PC-3 (cell line): ENCODE measurements at regions of chr2 and their contacts with region 1.

Region 1: DNA sequence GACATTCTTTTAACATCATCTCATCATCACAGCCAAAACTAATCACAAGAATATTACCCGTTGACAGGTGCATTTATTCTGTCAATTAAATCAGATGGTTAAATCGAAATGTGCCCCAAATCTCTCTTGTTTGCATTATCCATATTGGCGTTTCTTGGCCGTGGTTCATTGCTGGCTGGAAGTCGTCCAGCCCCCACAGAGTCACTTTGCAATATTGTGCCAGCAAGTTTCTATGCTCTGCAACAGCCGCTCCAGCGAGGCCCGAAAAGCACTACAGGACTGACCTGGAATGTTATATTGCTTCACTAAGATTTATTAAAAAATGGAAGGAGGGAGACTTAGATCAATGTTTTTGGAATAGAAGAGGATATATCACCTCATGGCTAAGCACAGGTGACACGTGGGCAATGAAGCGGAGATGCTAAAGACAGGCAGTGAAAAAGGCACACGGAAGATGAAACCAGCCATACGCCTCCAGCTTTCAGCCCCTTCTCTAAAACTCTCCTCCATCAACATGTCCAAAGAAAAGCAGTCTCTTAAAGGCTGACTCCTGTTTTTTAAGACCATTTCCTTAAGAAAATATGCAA is 176.8 kb upstream of the VRK2 start:
- DNase-seq: peak; percentile 77
- ATAC-seq: no peak
- H3K4me3 ChIP-seq: no peak overlapping the region
- H3K27ac ChIP-seq: peak overlapping the region; percentile 97
- H3K4me1 ChIP-seq: peaks cover 68% of the 10 kb centered on the region
- H3K27me3 ChIP-seq: no peaks in the 10 kb centered on the region
- CTCF ChIP-seq: no peak

Region 2: GRCh38 chr2:57881998-57882884 is 12.4 kb after region 1 on chr2:
- CTCF ChIA-PET with region 1: no interaction called
- POLR2A ChIA-PET with region 1: no interaction called
- intact Hi-C with region 1: loop called (anchors 1 kb)
- DNase-seq: peak; percentile 95
- ATAC-seq: peak; percentile 76
- H3K4me3 ChIP-seq: peak overlapping the region; percentile 49
- H3K27ac ChIP-seq: peak overlapping the region; percentile 97
- H3K4me1 ChIP-seq: peaks cover 84% of the 10 kb centered on the region
- H3K27me3 ChIP-seq: no peaks in the 10 kb centered on the region
- CTCF ChIP-seq: no peak

Region 3: DNA sequence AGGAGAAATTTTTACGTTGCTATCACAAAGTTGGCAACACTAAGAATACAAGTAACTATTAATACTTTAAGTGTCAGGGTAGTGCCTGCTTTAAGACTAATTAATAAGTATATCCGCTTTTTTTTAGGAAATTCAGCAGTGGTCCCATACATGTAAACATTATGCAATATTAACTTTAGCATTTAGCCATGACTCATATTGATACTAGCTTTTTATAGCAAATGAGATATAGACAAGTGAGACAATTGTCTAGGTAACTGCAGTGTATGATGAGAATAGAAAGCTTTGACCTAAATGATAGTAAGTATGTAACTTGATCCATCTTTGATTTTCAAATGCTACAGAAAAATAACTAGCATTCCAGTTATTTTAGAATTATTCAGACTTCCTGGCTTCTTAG is 149.4 kb after region 1 on chr2:
- CTCF ChIA-PET with region 1: no interaction called
- POLR2A ChIA-PET with region 1: no interaction called
- intact Hi-C with region 1: no loop called
- DNase-seq: peak; percentile 42
- ATAC-seq: peak; percentile 84
- H3K4me3 ChIP-seq: no peak overlapping the region
- H3K27ac ChIP-seq: no peak overlapping the region
- H3K4me1 ChIP-seq: peaks cover 15% of the 10 kb centered on the region
- H3K27me3 ChIP-seq: no peaks in the 10 kb centered on the region
- CTCF ChIP-seq: no peak

Region 4: GRCh38 chr2:58107803-58108710 is 238.2 kb after region 1 on chr2:
- CTCF ChIA-PET with region 1: no interaction called
- POLR2A ChIA-PET with region 1: no interaction called
- intact Hi-C with region 1: loop called (anchors 5 kb)
- DNase-seq: peak; percentile 93
- ATAC-seq: peak; percentile 79
- H3K4me3 ChIP-seq: peak overlapping the region; percentile 25
- H3K27ac ChIP-seq: peak overlapping the region; percentile 99
- H3K4me1 ChIP-seq: peaks cover 63% of the 10 kb centered on the region
- H3K27me3 ChIP-seq: no peaks in the 10 kb centered on the region
- CTCF ChIP-seq: no peak